ENCODE measurements at regions of chr1 and their contacts with region 1.

Region 1: DNA sequence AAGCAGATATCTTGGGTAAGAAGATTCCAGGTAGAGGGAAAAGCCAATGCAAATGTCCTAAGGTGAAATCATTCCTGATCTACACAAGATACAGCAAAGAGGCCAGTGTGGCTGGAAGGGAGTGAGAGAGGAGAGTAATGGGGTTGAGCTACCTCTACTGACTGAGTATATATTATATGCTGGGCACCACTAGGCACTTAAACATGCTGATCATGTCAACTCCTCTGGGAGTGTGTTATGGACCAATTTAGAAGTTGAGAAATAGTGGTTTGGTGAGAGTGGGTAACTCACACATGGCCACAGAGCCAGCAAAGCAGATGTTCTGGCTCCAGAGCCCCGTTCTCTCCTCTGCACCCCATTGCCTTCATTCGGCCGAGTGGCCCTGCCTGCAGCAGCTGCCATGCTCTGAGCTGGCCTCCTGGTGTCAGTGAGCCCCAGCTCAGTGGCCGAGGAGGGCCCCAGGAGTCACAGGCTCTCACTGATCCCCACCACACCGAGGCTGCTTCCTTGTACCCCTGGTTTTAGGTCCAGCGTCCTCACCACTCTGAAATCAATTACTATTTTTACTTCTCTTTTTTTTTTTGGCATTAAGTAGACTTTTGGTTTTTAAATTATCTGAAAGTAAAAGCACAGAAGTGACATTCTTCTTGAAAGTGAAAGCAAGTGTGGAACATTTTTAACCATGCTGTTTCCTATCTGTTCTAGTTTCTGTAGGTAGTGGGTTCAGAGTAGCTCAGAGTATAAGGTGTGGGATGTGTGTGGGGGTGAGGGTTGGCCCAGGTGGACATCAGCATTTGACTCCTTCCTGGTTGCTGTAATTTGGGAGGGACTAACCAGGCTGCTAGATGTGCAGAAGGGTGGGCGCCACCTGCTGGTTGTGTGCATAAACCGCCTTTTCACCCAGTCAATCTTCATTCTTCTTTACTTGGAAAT is 45.8 kb upstream of the CRNN start:
- DNase-seq: peak; percentile 85
- H3K4me3 Mint-ChIP-seq: no peak overlapping the region
- H3K27ac Mint-ChIP-seq: no peak overlapping the region
- H3K4me1 Mint-ChIP-seq: peaks cover 17% of the 10 kb centered on the region
- H3K27me3 Mint-ChIP-seq: no peaks in the 10 kb centered on the region
- CTCF ChIP-seq: peak; percentile 87

Region 2: GRCh38 chr1:152141974-152142584 is 317.8 kb before region 1 on chr1:
- CTCF ChIA-PET with region 1: interaction called, 29 read pairs
- POLR2A ChIA-PET with region 1: interaction called, 3 read pairs
- intact Hi-C with region 1: loop called (anchors 1 kb)
- DNase-seq: peak; percentile 94
- H3K4me3 Mint-ChIP-seq: no peak overlapping the region
- H3K27ac Mint-ChIP-seq: no peak overlapping the region
- H3K4me1 Mint-ChIP-seq: peaks cover 8% of the 10 kb centered on the region
- H3K27me3 Mint-ChIP-seq: peaks cover 8% of the 10 kb centered on the region
- CTCF ChIP-seq: peak; percentile 93

Region 3: GRCh38 chr1:152182431-152182830 is 277.4 kb before region 1 on chr1:
- CTCF ChIA-PET with region 1: interaction called, 187 read pairs
- POLR2A ChIA-PET with region 1: interaction called, 7 read pairs
- intact Hi-C with region 1: no loop called
- DNase-seq: peak; percentile 80
- H3K4me3 Mint-ChIP-seq: no peak overlapping the region
- H3K27ac Mint-ChIP-seq: peak overlapping the region; percentile 82
- H3K4me1 Mint-ChIP-seq: peaks cover 64% of the 10 kb centered on the region
- H3K27me3 Mint-ChIP-seq: no peaks in the 10 kb centered on the region
- CTCF ChIP-seq: peak; percentile 94

Region 4: GRCh38 chr1:152252157-152252556 is 207.7 kb before region 1 on chr1:
- CTCF ChIA-PET with region 1: interaction called, 18 read pairs
- POLR2A ChIA-PET with region 1: interaction called, 3 read pairs
- intact Hi-C with region 1: no loop called
- DNase-seq: peak; percentile 49
- H3K4me3 Mint-ChIP-seq: no peak overlapping the region
- H3K27ac Mint-ChIP-seq: peak overlapping the region; percentile 1
- H3K4me1 Mint-ChIP-seq: peaks cover 13% of the 10 kb centered on the region
- H3K27me3 Mint-ChIP-seq: no peaks in the 10 kb centered on the region
- CTCF ChIP-seq: no peak

Region 5: DNA sequence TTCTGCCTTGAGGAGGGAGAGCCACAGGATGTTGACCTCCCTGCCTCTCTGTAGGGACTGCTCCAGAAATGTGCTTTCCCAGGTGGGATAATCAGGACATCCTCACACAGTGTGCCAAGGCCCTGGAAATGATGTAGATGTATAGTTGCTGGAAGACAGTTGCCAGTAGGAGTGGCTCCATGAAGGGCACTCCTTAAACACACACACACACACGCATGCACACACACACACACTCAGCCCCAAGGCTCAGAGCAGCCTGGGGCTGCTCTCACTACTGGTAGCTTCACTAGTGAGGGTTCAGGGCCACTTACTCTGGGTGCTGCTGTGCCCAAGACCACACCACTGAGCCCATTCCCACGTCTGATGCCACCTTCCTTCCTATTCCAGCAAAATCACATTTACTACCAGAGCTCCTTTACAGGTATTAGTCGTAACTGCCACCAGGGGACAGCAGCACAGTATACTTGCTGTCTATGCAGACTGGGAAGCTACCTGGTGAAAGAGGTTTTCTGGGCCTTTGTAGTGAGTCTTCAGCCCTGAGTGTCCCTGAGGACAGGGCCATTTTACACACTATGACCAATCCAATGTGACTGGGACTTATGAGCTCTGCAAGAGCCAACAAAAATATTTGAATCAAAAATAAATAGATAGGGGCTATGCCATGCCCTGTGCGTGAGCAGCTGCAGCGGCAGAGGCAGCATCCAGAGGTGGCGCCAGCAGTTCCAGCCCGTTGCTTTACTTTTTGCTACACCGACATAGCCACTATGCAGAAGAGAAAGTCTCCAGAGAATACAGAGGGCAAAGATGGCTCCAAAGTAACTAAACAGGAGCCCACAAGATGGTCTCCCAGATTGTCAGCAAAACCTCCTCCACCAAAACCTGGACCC is 60.8 kb before region 1 on chr1:
- CTCF ChIA-PET with region 1: interaction called, 82 read pairs
- POLR2A ChIA-PET with region 1: interaction called, 11 read pairs
- intact Hi-C with region 1: loop called (anchors 1 kb)
- DNase-seq: peak; percentile 73
- H3K4me3 Mint-ChIP-seq: no peak overlapping the region
- H3K27ac Mint-ChIP-seq: no peak overlapping the region
- H3K4me1 Mint-ChIP-seq: peaks cover 6% of the 10 kb centered on the region
- H3K27me3 Mint-ChIP-seq: peaks cover 86% of the 10 kb centered on the region
- CTCF ChIP-seq: peak; percentile 74

Region 6: GRCh38 chr1:152479792-152480595 is 20.1 kb after region 1 on chr1:
- CTCF ChIA-PET with region 1: interaction called, 26 read pairs
- POLR2A ChIA-PET with region 1: no interaction called
- intact Hi-C with region 1: no loop called
- DNase-seq: peak; percentile 40
- H3K4me3 Mint-ChIP-seq: no peak overlapping the region
- H3K27ac Mint-ChIP-seq: no peak overlapping the region
- H3K4me1 Mint-ChIP-seq: peaks cover 6% of the 10 kb centered on the region
- H3K27me3 Mint-ChIP-seq: no peaks in the 10 kb centered on the region
- CTCF ChIP-seq: peak; percentile 58

Region 7: DNA sequence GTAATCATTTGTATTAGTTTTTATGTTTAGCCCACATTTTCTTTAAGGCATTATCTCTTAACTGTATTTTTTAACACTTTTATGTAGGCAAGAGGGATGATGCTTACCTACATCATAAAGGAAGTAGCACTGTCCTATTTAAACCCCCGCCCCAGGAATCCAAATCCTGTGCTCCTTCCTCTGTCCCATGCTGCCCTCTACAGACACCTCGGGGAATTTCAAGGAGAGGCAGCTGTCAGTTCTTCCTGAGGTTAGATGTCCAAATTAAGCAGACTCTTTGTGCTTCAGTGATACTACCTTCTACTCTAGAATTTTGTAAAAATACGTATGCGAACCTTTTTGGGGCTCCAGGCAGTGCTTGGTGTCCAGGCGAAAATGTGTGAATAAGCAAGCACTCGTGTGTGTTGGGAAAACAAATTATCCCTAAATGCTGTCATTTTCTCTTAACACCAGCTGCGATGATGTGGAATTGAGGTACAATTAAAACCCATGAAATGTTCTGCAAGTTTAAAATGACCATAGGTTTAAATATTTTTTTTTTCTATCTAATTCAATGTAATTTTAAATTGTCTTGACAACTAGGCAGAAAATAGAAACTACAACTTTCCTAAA is 73.6 kb after region 1 on chr1:
- CTCF ChIA-PET with region 1: interaction called, 47 read pairs
- POLR2A ChIA-PET with region 1: interaction called, 5 read pairs
- intact Hi-C with region 1: loop called (anchors 1 kb)
- DNase-seq: peak; percentile 88
- H3K4me3 Mint-ChIP-seq: no peak overlapping the region
- H3K27ac Mint-ChIP-seq: no peak overlapping the region
- H3K4me1 Mint-ChIP-seq: peaks cover 5% of the 10 kb centered on the region
- H3K27me3 Mint-ChIP-seq: no peaks in the 10 kb centered on the region
- CTCF ChIP-seq: peak; percentile 99

Region 8: DNA sequence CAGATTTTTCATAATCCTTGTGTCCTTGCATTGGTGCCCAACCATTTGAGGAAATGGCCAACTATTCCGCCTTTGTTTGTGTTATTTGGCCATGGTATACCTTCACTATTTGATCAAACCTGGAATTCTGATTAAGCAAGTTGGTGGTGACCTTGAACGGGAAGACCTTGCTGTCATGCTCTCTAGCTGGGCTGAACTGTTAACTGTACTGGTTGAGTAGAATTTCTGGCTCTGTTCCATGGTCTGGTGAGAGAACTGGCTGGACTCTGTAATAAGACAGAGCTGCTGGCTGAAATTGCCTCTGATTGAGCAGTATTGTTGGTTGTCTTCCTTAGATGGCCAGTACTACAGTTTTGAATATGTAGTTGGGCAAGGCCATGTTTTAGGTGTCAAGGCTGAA is 137.1 kb after region 1 on chr1:
- CTCF ChIA-PET with region 1: no interaction called
- POLR2A ChIA-PET with region 1: no interaction called
- intact Hi-C with region 1: no loop called
- DNase-seq: no peak
- H3K4me3 Mint-ChIP-seq: no peak overlapping the region
- H3K27ac Mint-ChIP-seq: no peak overlapping the region
- H3K4me1 Mint-ChIP-seq: no peaks in the 10 kb centered on the region
- H3K27me3 Mint-ChIP-seq: no peaks in the 10 kb centered on the region
- CTCF ChIP-seq: no peak

Measured in MCF 10A (cell line).